Vagina (tissue), 2 donors: ENCODE measurements at regions of chr11 and their contacts with region 1.

Region 1: DNA sequence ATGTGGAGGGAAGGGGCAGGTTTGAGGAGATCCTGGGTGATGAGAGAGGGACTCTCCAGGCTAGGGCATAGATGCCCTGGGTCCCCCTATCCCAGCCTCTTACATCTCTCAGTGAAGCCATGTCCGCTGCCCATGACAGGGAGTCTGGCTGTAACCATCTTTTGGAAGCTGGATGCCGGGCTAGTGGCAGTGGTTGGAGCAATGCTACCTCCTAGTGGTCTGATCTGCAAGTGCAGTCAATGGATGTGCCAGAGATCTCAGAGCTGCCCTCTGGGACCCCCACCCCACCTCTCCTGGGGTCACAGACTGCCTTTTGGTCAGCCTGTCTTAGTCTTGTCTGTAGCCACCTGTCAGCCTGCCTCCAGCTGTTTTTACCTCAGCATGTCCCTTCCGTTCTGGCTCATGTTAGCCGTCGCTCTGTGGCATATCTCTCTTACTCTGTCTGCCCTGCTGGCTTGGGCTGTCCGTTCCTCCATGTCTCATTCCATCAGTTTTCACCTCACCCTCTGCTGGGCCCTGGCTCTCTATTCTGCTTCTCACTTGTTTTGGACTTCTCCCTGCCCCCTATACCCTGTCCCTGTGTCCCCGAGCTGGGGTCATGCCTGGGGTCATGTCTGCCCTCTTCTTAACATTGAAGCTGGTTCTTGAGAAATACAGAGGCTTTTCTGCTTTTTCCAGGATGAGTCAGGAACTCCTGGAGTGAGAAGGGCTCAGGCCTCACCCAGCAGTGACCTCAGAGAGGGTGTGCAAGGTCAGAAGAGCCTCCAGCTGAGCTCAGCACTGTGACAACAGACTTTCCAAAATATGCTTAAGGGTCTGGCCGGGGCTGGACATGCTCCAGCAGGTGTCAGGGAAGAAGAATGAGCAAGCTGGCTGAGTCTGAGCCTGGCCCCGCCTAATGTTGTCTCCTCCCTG is 52.0 kb upstream of the THY1 start:
- DNase-seq: peak; percentile 87 to 92
- H3K4me3 ChIP-seq: no peak overlapping the region
- H3K27ac ChIP-seq: peak overlapping the region; percentile 23
- H3K4me1 ChIP-seq: peaks cover 10% of the 10 kb centered on the region
- H3K27me3 ChIP-seq: no peaks in the 10 kb centered on the region
- CTCF ChIP-seq: peak; percentile 79 to 85 (median 80)
- POLR2A ChIP-seq: no peak

Region 2: DNA sequence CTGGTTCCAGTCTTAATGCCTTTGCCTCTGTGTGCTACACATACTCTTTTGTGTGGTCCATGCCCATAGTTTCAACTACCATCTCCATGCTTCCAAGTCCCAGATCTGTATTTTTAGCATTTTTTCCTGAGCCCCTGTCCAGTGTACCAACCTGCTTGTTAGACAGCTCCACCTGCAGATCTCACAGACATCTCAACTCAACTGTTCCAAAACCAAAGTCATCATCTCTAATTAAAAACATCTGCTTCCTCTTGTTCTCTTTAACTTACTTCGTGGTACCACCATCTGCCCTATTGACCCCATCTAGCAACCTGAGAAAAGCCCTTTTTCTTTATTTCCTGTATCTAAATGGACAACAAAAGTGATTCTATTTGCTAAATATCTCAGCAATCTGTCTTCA is 1047.2 kb before region 1 on chr11:
- intact Hi-C with region 1: loop called (anchors 5 kb)
- DNase-seq: no peak
- H3K4me3 ChIP-seq: no peak overlapping the region
- H3K27ac ChIP-seq: no peak overlapping the region
- H3K4me1 ChIP-seq: no peaks in the 10 kb centered on the region
- H3K27me3 ChIP-seq: no peaks in the 10 kb centered on the region
- CTCF ChIP-seq: no peak
- POLR2A ChIP-seq: no peak

Region 3: DNA sequence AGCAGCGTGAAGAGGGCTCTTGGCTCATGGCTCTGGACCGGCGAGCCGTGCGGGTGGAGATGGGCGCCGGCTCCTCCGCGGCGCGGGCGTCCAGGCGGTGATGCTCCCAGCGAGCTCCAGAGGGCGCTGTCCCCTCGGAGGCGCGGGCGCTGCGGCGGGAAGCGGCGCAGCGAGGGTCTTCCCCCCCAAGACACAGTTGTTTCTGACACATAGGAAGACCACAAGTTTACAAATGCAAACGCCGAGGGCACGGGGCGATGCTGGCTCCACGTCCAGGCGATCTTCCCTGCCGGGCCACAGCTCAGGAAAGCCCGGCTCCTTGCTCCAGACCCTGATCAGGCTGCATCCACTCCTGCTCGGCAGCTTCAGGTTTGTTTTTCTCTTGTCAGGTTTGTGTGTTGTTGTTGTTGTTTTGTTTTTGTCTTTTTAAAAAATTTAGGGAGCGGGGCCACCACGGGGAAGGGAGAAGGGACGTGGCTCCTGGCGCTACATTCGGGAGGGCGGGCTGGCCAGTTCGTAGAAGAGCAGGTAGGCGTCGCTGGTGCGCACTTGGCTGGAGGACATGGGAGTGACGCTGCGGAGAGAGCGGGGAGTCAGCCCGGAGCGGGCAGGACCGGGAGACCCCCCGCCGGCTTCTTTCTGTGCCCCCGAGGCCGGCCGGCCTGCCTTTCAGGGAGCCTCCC is 118.4 kb before region 1 on chr11:
- intact Hi-C with region 1: loop called (anchors 5 kb)
- DNase-seq: no peak
- H3K4me3 ChIP-seq: peak overlapping the region; percentile 42 to 48
- H3K27ac ChIP-seq: peak overlapping the region; percentile 72
- H3K4me1 ChIP-seq: peaks cover 13% of the 10 kb centered on the region
- H3K27me3 ChIP-seq: no peaks in the 10 kb centered on the region
- CTCF ChIP-seq: peak; percentile 82 to 95 (median 88)
- POLR2A ChIP-seq: no peak

Region 4: GRCh38 chr11:119509969-119510401 is 35.0 kb after region 1 on chr11:
- intact Hi-C with region 1: no loop called
- DNase-seq: no peak
- H3K4me3 ChIP-seq: no peak overlapping the region
- H3K27ac ChIP-seq: no peak overlapping the region
- H3K4me1 ChIP-seq: no peaks in the 10 kb centered on the region
- H3K27me3 ChIP-seq: no peaks in the 10 kb centered on the region
- CTCF ChIP-seq: no peak
- POLR2A ChIP-seq: no peak